ENCODE measurements at regions of chr17 and their contacts with region 1.

Region 1: DNA sequence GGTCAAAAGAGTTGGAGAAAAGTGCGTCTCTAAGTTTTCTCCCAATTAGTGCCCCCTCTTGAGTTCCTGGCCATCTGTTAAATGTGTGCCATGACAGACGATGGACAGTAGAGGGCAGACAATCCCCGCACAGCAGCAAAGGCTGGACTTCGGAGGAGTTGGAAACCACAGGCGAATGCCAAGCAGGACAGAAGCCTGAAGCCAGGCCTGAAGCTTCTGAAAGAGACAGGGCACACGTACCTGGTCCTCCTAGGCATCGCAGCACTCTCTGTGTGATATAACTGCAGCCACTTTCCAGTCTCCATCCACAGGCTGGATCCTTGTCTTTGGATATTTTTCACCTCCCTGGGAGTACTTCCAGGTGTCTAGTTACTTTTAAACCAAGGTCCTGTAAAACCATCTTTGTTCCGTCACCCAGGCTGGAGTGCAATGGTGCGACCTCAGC is 14.5 kb downstream of the C17orf100 start:
- DNase-seq: peak; percentile 73 to 82 (median 73)
- H3K4me3 ChIP-seq: no peak overlapping the region
- H3K27ac ChIP-seq: no peak overlapping the region
- H3K4me1 ChIP-seq: peaks cover 6 to 20% (median 11%) of the 10 kb centered on the region in 4 experiments
- H3K27me3 ChIP-seq: peaks cover 0 to 17% (median 9%) of the 10 kb centered on the region in 5 experiments

Region 2: DNA sequence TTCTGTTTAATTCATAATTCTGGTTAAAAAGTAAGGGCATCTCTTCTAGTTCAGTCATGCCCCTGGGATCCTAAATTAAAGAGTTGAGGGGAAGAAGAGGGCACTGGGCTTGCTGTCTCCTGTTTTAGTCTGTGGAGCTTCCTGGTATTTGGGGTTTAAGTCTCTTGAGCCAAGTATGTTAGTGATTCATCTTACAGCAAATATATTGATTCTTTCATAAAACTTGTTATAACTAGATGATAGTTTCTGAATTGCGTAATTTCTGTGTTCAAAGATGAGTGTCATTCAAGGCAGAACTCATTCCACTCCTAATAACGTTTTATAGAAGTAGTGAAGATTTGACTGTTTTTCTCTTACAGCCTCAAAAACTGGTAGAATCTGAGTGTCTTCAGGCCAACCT is 23.5 kb before region 1 on chr17:
- CTCF ChIA-PET with region 1: no interaction called
- POLR2A ChIA-PET with region 1: no interaction called
- DNase-seq: no peak
- H3K4me3 ChIP-seq: no peak overlapping the region
- H3K27ac ChIP-seq: no peak overlapping the region
- H3K4me1 ChIP-seq: peaks cover 7 to 37% (median 31%) of the 10 kb centered on the region in 4 experiments
- H3K27me3 ChIP-seq: no peaks in the 10 kb centered on the region

Region 3: GRCh38 chr17:6677158-6677831 is 11.2 kb after region 1 on chr17:
- CTCF ChIA-PET with region 1: interaction called, 19 read pairs
- POLR2A ChIA-PET with region 1: interaction called, 4 read pairs
- DNase-seq: peak; percentile 45 to 78 (median 76)
- H3K4me3 ChIP-seq: no peak overlapping the region
- H3K27ac ChIP-seq: no peak overlapping the region
- H3K4me1 ChIP-seq: peaks cover 0 to 12% (median 11%) of the 10 kb centered on the region in 4 experiments
- H3K27me3 ChIP-seq: peaks cover 0 to 56% (median 29%) of the 10 kb centered on the region in 5 experiments